ENCODE measurements at regions of chr4 and their contacts with region 1.

Region 1: GRCh38 chr4:99855678-99856077 is 38.5 kb downstream of the LAMTOR3 start:
- DNase-seq: peak; percentile 49
- ATAC-seq: peak; percentile 16
- H3K4me3 Mint-ChIP-seq: no peak overlapping the region
- H3K27ac Mint-ChIP-seq: peak overlapping the region; percentile 70
- H3K4me1 Mint-ChIP-seq: peaks cover 67% of the 10 kb centered on the region
- H3K27me3 Mint-ChIP-seq: no peaks in the 10 kb centered on the region

Region 2: DNA sequence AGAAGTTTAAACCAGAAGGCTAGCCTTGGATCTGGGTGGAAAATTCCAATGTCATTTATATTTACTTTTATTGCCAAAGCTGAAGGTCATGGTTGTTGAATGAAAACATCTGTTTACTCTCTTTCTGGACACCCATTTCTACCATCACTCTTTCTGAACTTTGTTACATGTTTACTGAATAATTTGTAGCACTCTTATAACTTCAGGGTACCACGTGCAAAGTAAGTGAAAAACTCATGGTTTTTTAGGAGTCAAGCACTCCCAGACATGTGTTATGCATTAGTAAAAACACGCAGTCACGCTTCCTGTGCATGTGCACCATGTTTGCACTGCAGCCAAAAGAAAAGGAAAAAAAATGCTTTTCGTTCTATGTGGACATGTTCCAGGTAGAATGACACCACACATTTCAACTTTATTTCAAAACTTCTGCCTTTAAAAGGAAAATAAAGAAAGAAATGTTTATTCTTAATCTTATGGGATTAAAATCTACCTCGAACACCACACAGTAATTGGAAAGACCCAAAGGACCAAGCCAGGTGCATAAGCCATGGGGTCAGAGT is 471.8 kb before region 1 on chr4:
- CTCF ChIA-PET with region 1: no interaction called
- POLR2A ChIA-PET with region 1: no interaction called
- intact Hi-C with region 1: no loop called
- DNase-seq: no peak
- ATAC-seq: no peak
- H3K4me3 Mint-ChIP-seq: no peak overlapping the region
- H3K27ac Mint-ChIP-seq: no peak overlapping the region
- H3K4me1 Mint-ChIP-seq: no peaks in the 10 kb centered on the region
- H3K27me3 Mint-ChIP-seq: peaks cover 5% of the 10 kb centered on the region

Region 3: DNA sequence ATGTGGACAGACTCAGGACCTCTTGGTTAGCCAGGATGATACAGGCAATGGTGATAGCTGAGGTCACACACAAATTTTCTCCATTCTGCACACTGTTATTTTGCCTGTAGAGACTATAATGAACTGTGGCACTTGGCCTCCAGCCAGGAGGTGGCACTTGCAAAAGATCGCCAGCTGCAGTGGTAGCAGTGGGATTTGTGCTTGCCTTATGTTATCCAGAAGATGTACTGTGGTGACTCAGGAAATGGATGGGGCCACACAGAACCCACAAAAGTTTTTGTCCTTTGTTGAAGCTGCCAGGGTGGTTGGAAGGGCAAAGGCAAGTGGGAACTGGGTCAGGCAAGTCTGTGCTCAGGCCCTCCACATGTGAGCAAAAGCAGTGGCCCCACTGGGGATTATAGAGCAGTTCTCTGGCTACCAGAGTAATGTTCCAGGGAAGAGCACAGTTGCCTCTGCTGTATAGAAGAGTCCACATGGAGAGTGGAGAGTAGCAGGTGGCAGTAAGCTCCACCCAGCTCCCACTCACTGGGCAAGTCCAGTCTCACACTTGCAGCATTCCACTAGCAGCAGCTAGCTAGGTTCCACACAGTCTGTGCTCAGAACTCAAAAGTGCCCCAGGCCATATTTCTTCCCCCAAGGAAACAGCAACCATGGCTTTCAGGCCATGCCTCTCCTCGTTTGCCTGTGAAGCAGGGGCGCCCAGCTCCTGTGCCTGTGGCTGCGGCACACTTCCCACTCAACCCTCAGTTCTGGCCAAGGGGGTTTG is 350.7 kb before region 1 on chr4:
- CTCF ChIA-PET with region 1: no interaction called
- POLR2A ChIA-PET with region 1: no interaction called
- intact Hi-C with region 1: loop called in 1 of 2 experiments (anchors 5 kb)
- DNase-seq: peak; percentile 27
- ATAC-seq: no peak
- H3K4me3 Mint-ChIP-seq: no peak overlapping the region
- H3K27ac Mint-ChIP-seq: peak overlapping the region; percentile 37
- H3K4me1 Mint-ChIP-seq: peaks cover 53% of the 10 kb centered on the region
- H3K27me3 Mint-ChIP-seq: no peaks in the 10 kb centered on the region

Region 4: GRCh38 chr4:99800332-99801004 is 55.2 kb before region 1 on chr4:
- CTCF ChIA-PET with region 1: no interaction called
- POLR2A ChIA-PET with region 1: no interaction called
- intact Hi-C with region 1: no loop called
- DNase-seq: no peak
- ATAC-seq: no peak
- H3K4me3 Mint-ChIP-seq: no peak overlapping the region
- H3K27ac Mint-ChIP-seq: no peak overlapping the region
- H3K4me1 Mint-ChIP-seq: no peaks in the 10 kb centered on the region
- H3K27me3 Mint-ChIP-seq: peaks cover 32% of the 10 kb centered on the region

Region 5: DNA sequence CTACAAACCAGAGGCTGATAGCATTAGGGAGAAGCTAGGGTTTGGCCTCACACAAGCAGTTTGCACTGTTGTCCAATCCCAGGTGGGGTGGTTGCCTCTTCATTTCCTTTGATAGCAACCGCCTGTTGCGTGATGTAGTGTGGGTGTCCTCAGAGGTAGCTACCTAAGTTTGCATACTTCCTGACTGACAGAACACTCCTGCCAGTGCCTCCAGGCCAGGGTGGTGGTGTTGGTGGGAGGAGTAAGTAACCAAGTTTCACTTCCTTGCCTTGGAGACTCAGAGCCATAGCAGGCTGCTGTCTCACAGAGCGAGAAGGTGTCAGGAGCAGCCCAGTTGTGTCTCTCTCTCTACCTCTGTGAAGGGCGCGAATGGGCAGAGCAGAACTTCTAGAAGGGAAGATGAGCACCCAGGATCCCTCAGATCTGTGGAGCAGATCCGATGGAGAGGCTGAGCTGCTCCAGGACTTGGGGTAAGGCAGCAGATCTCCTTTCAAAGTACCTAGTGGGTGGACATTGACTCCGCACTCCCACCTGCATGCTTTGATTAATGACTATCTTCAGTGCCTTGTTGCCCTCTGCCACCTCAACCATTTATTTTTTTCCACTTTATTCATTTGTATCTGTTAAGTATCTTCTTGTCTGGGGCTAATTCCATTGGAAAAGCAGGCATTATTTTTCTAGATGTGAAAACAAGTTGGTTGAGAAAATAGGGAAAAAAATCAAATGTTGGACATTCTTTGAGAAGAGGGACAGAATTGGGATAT is 39.0 kb before region 1 on chr4 and contains the start of gene DAPP1:
- CTCF ChIA-PET with region 1: interaction called, 19 read pairs
- POLR2A ChIA-PET with region 1: no interaction called
- intact Hi-C with region 1: loop called in 1 of 2 experiments (anchors 1 kb)
- DNase-seq: peak; percentile 88
- ATAC-seq: peak; percentile 93
- H3K4me3 Mint-ChIP-seq: peak within 1 kb of the TSS; percentile 78
- H3K27ac Mint-ChIP-seq: peak within 1 kb of the TSS; percentile 96
- H3K4me1 Mint-ChIP-seq: peaks cover 77% of the 10 kb centered on the region
- H3K27me3 Mint-ChIP-seq: no peaks in the 10 kb centered on the region
- total RNA-seq, gene DAPP1: 24.7 to 25.9 TPM

Region 6: GRCh38 chr4:99885063-99885664 is 29.5 kb after region 1 on chr4:
- CTCF ChIA-PET with region 1: interaction called, 3 read pairs
- POLR2A ChIA-PET with region 1: no interaction called
- intact Hi-C with region 1: loop called in 1 of 2 experiments (anchors 5 kb)
- DNase-seq: peak; percentile 40
- ATAC-seq: no peak
- H3K4me3 Mint-ChIP-seq: no peak overlapping the region
- H3K27ac Mint-ChIP-seq: no peak overlapping the region
- H3K4me1 Mint-ChIP-seq: peaks cover 10% of the 10 kb centered on the region
- H3K27me3 Mint-ChIP-seq: no peaks in the 10 kb centered on the region

Region 7: DNA sequence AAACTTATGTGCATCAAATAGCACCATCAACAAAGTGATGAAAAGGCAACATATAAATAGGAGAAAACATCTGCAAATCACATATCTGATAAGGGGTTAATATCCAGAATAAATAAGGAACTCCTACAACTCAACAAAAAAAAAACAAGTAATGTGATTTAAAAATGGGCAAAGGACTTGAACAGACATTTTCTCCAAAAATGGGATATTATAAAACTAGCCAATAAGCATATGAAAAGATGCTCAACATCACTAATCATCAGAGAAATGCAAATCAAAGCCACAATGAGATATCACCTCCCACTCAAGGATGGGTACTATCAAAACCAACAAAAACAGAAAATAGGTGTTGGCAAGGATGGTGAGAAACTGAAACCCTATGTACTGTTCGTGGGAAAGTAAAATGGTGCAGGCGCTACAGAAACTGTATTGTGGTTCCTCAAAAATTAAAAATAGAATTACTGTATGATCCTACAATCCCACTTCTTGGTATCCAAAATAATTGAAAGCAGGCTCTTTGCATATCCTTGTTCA is 88.3 kb after region 1 on chr4:
- CTCF ChIA-PET with region 1: interaction called, 3 read pairs
- POLR2A ChIA-PET with region 1: no interaction called
- intact Hi-C with region 1: loop called (anchors 1 kb)
- DNase-seq: no peak
- ATAC-seq: no peak
- H3K4me3 Mint-ChIP-seq: no peak overlapping the region
- H3K27ac Mint-ChIP-seq: peak overlapping the region; percentile 25
- H3K4me1 Mint-ChIP-seq: peaks cover 58% of the 10 kb centered on the region
- H3K27me3 Mint-ChIP-seq: no peaks in the 10 kb centered on the region

Region 8: DNA sequence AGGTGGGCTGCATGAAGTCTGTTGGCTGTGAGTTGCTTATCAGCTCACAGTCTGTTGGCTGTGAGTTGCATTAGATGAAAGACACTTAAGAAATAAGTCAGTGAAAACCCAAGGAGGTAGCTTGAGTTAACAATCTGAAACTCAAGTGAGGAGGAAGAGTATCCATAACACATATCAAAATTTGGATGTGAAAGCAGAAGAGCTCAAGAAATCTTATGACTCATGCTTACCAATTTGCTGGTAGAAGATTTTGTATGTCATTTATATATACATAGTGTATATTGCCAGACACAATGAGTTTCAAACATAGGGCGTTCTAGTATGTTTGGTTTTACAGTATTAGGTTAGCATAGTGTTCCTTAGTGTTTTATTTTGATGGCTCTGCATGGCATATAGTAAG is 227.2 kb after region 1 on chr4:
- CTCF ChIA-PET with region 1: no interaction called
- POLR2A ChIA-PET with region 1: no interaction called
- intact Hi-C with region 1: loop called in 1 of 2 experiments (anchors 5 kb)
- DNase-seq: no peak
- ATAC-seq: peak; percentile 73
- H3K4me3 Mint-ChIP-seq: no peak overlapping the region
- H3K27ac Mint-ChIP-seq: peak overlapping the region; percentile 81
- H3K4me1 Mint-ChIP-seq: peaks cover 52% of the 10 kb centered on the region
- H3K27me3 Mint-ChIP-seq: peaks cover 3% of the 10 kb centered on the region

Measured in activated CD4-positive, alpha-beta T cell treated with anti-CD3 and anti-CD28 coated beads for 36 hours (primary cell).